Activated naive CD4-positive, alpha-beta T cell treated with anti-CD3 and anti-CD28 coated beads for 36 hours (primary cell): ENCODE measurements at regions of chr5 and their contacts with region 1.

Region 1: GRCh38 chr5:115888027-115888426 is 46.3 kb downstream of the AP3S1 start:
- DNase-seq: no peak
- H3K4me3 Mint-ChIP-seq: no peak overlapping the region
- H3K27ac Mint-ChIP-seq: no peak overlapping the region
- H3K4me1 Mint-ChIP-seq: no peaks in the 10 kb centered on the region
- H3K27me3 Mint-ChIP-seq: no peaks in the 10 kb centered on the region

Region 2: DNA sequence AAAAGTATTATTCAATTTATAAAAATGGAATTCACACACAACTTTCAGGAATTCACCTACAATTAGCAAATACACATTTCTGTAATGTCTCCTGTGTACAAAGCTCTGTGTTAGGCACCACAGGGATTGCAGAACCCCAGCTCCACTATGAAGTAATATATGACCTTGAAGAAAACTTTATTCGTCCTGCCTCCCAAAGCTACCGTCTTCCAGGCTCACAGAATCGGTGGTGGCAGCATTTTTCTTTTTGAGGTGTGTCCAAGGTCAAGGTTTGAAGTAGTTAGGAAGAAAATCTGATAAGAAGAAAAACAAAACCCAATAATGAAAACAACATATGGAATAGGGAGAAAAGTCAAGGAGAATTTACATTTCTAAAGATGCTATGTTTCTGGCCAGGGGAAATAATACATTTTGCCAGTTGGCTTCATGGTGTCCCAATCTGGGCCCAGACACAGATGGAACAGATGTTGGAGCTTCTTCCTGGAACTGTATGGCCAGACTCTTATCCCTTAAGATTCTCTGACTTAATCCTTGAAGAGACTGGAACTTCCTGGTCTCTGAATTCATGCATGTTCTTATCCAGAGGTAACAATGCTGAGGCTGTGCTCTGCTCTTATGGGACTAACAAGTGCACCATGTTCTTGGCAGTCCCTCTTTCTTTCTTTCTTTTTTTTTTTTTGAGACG is 52.2 kb after region 1 on chr5:
- CTCF ChIA-PET with region 1: no interaction called
- intact Hi-C with region 1: no loop called
- DNase-seq: no peak
- H3K4me3 Mint-ChIP-seq: no peak overlapping the region
- H3K27ac Mint-ChIP-seq: no peak overlapping the region
- H3K4me1 Mint-ChIP-seq: no peaks in the 10 kb centered on the region
- H3K27me3 Mint-ChIP-seq: peaks cover 6% of the 10 kb centered on the region

Region 3: DNA sequence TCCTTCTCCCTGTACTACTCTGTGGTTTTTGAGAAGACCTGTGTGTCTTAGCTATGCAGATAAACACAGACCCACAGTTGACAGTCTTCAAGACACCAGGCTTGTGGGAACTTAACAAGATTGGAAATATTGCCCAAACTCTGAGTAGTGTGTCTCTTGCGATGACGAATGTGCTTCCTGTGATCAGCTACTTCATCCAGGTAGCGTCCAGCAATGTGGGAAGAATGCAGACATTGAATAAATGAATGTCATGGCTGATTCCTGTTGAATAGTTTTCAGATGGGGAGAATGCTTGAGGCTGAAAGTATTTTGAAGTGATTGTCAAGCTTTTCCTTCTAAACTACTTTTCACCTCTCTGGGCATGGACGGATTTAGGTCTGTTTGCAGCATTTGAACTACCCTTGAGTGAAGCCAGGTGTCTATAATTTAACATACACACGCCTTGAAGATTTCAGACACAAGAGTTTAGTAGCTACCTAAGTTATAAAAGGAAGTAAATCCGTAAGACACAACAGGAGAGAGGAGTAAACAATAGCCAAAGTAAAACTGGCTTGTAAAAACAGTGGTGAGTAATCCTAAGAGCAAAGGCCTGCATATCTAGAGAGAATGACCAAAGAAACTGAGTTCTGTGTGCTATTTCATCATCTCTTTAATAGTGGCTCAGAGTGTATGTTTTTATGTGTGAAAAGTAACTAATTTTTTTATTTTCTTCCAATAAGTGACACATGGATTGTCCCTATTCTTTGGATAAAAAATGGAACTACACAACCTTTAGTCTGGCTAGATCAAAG is 114.3 kb after region 1 on chr5:
- CTCF ChIA-PET with region 1: no interaction called
- intact Hi-C with region 1: no loop called
- DNase-seq: no peak
- H3K4me3 Mint-ChIP-seq: no peak overlapping the region
- H3K27ac Mint-ChIP-seq: no peak overlapping the region
- H3K4me1 Mint-ChIP-seq: no peaks in the 10 kb centered on the region
- H3K27me3 Mint-ChIP-seq: peaks cover 4% of the 10 kb centered on the region

Region 4: GRCh38 chr5:116068028-116068632 is 180.1 kb after region 1 on chr5:
- CTCF ChIA-PET with region 1: no interaction called
- intact Hi-C with region 1: loop called (anchors 1 kb)
- DNase-seq: peak; percentile 55
- H3K4me3 Mint-ChIP-seq: no peak overlapping the region
- H3K27ac Mint-ChIP-seq: no peak overlapping the region
- H3K4me1 Mint-ChIP-seq: no peaks in the 10 kb centered on the region
- H3K27me3 Mint-ChIP-seq: peaks cover 22% of the 10 kb centered on the region